ENCODE measurements at regions of chr1 and their contacts with region 1.

Region 1: DNA sequence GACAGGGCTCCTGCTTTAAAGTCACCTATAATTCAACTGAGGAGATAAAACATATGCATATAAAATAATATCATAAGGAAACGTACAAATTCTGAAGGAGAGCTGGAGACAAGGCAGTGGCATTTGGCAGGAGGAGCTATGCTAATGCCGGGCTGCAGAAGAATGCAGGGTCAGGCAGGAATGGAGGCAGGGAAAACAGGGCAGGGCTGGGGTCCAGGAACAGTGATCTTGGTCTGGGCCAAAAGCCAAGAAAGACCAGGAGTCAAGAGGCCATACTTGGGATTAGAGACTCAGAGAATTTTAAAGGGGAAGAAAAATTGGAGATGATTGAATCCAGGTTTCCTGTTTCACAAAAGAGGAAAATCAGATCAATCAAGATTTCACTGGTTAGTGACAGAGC is 20.0 kb upstream of the BRDT start:
- DNase-seq: peak; percentile 33 to 79 (median 45)
- H3K4me3 ChIP-seq: no peak overlapping the region
- H3K27ac ChIP-seq: no peak overlapping the region
- H3K4me1 ChIP-seq: no peaks in the 10 kb centered on the region
- H3K27me3 ChIP-seq: no peaks in the 10 kb centered on the region
- CTCF ChIP-seq: no peak

Region 2: DNA sequence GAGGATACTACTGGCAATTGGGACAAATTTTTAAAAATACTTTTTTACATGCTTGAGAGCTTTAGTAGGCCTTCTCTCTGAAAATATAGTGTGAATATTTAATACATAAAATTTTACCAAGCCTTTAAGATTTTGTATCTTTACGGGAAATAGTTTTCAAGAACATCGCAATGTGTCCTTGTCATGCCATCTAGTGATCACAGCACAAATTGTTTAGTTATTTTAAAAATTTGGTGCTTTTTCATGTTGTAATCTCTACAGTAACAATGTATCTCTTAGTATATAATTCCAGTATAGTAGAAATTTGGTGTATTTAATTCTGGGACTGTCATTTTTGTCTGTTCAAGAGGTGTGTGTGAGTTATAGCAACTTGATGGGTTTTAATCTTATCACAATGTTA is 421.9 kb before region 1 on chr1:
- intact Hi-C with region 1: loop called (anchors 5 kb)
- DNase-seq: peak in 1 of 5 donors; percentile 27
- H3K4me3 ChIP-seq: no peak overlapping the region
- H3K27ac ChIP-seq: no peak overlapping the region
- H3K4me1 ChIP-seq: no peaks in the 10 kb centered on the region
- H3K27me3 ChIP-seq: no peaks in the 10 kb centered on the region
- CTCF ChIP-seq: peak; percentile 17

Region 3: DNA sequence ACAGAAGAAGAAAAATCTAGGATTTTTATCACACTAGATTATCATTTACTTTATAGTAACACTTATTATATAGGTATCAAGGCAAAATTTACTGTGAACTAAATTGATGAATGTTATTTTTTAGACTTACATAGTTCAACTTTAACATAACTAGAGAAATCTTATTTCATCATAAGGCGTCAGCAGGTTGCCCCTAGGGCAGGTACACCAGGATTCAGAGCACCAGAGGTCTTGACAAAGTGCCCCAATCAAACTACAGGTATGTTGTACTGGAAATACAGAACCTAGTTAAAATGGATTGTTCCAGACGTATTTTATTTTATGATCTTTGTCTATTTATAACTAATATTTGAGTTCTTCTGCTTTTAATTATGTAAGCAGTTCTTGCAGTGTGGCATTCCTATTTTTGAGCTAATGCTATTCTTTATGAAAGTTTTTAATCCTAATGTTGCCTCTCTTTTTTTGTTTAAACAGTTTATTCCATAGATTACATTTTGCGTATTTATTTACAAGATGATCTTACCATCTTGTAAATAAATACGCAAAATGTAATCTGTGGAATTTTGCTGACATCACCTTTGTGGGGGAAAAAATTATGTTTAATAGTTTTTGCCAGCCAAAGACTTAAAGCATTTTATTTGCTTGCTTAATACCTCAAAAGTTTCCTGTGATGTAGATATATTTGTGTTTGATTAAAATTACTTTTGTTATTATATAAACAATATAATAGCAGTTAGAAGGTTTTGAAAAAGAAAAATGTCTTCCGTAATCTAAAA is 413.4 kb before region 1 on chr1:
- intact Hi-C with region 1: loop called (anchors 5 kb)
- DNase-seq: no peak
- H3K4me3 ChIP-seq: no peak overlapping the region
- H3K27ac ChIP-seq: no peak overlapping the region
- H3K4me1 ChIP-seq: no peaks in the 10 kb centered on the region
- H3K27me3 ChIP-seq: no peaks in the 10 kb centered on the region
- CTCF ChIP-seq: no peak

Region 4: DNA sequence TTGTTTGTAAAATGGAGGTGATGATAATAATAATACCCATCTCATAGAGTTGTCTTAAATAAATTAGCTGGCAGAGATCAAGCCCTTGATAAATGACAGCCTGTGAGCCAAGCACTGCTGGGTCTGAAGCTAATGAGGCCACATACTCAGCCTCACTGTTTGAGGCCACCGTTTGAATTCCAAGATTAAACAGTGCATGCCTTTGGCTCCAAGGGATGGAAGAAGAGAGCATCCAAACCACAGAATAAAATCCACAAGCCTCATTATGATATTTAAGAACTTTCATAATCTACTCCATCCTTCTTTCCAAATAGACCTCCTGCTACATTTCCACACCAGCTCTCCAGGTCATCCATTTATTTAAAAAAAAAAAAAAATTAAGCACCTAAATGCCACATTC is 72.3 kb before region 1 on chr1:
- intact Hi-C with region 1: no loop called
- DNase-seq: no peak
- H3K4me3 ChIP-seq: no peak overlapping the region
- H3K27ac ChIP-seq: no peak overlapping the region
- H3K4me1 ChIP-seq: no peaks in the 10 kb centered on the region
- H3K27me3 ChIP-seq: no peaks in the 10 kb centered on the region
- CTCF ChIP-seq: no peak

Region 5: GRCh38 chr1:92065044-92065443 is 135.8 kb after region 1 on chr1:
- intact Hi-C with region 1: no loop called
- DNase-seq: no peak
- H3K4me3 ChIP-seq: no peak overlapping the region
- H3K27ac ChIP-seq: no peak overlapping the region
- H3K4me1 ChIP-seq: no peaks in the 10 kb centered on the region
- H3K27me3 ChIP-seq: no peaks in the 10 kb centered on the region
- CTCF ChIP-seq: no peak

Region 6: DNA sequence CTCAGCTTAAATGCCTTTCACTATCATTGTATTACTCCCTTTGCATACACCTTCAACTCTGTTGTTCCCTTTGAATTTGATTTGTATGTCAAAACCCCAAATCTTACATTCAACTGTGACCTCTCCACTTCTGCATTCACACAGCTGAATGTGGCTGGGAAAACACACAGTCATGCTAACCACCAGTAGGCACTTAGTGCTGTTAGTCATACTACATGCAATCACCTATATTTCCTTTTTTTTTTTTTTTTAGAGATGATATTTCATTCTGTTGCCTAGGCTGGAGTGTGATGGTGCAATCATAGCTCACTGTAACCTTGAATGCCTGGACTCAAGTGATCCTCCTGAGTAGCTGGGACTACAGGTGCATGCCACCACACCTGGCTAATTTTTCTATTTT is 167.1 kb after region 1 on chr1:
- intact Hi-C with region 1: no loop called
- DNase-seq: no peak
- H3K4me3 ChIP-seq: no peak overlapping the region
- H3K27ac ChIP-seq: no peak overlapping the region
- H3K4me1 ChIP-seq: no peaks in the 10 kb centered on the region
- H3K27me3 ChIP-seq: no peaks in the 10 kb centered on the region
- CTCF ChIP-seq: no peak